HEK293 (cell line): ENCODE measurements at regions of chr1 and their contacts with region 1.

Region 1: GRCh38 chr1:109984456-109985275 is at the start of gene AHCYL1:
- H3K4me3 ChIP-seq: peak within 1 kb of the TSS; percentile 81
- H3K27ac ChIP-seq: peak within 1 kb of the TSS; percentile 68
- H3K4me1 ChIP-seq: 0 out of 2 replicates have a peak, but pooled peaks cover 3% of the 10 kb centered on the region
- CTCF ChIP-seq: peak; percentile 99

Region 2: DNA sequence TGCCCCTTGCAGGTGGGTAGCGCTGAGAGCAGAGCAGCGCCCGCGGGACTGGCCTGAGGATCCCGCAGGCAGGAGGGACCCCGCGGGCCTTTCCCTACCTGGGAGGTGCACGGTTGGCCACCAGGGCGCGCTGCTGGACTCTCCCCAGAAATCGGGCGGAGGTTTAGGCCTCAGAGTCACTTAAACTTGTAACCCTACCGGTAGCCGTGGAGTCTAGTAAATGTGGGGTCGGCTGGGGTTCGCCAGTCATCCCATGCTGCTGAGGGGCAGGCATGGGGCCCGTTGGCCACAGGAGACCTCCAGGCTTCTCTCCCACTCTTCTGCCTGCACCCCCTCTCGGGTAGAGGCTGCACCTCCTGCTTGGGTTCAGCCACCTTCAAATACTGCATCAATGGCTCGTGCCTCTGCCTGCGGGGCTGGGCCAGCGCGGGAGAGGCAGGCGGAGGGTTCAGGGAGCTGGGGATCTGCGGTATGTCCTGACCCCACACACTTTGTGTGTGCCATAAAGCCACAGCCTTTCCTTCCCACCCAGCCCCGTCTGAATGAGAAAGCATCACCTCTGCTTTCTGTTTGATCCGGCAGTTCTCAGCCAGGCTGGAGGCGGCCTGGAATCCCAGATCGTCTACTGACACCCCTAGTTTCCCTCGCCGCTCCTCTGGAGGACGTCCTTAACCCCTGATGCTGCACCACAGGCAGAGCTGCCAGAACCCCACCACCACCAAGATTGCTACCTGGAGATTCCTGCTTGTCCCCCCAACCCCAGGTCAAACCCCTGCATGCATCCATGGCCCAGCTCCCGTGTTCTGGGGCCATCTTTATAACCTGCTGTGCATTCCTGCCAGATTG is 341.1 kb before region 1 on chr1:
- CTCF ChIA-PET with region 1: interaction called, 87 read pairs
- POLR2A ChIA-PET with region 1: interaction called, 6 read pairs
- H3K4me3 ChIP-seq: no peak overlapping the region
- H3K27ac ChIP-seq: no peak overlapping the region
- H3K4me1 ChIP-seq: no peaks in the 10 kb centered on the region
- CTCF ChIP-seq: peak; percentile 89

Region 3: DNA sequence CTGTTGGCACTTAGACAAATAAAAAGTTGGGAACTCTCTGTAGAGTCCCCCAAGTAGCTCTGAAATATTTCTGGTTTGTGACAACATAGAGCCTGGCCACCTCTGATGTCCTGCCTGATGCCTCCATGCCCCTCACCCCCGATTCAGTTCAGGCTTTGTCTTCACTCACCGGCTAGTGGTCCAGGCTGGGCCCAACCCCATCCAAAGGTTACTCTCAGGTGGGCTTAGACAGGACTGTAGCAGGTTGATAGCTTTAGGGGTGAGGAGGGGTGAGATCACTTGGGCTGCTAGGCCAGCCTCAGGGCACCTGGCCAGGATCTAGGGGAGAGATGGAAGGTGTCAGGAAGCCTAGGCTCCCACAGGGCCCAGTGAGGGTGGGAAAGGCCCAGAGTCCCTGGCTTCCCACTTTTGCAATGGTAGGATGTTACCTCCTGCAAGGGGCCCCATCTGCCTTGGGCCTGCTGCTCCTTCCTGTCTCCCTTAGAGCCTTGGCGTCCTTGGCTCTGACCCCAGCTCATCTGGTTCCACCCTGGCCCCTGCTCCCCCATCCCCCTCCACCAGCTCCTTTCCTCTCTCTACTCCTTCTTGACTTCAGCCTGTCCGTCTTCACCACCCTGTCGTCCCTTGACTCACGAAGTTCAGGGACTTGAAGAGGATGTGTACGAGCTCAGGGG is 227.7 kb before region 1 on chr1:
- CTCF ChIA-PET with region 1: interaction called, 12 read pairs
- POLR2A ChIA-PET with region 1: no interaction called
- H3K4me3 ChIP-seq: no peak overlapping the region
- H3K27ac ChIP-seq: no peak overlapping the region
- H3K4me1 ChIP-seq: no peaks in the 10 kb centered on the region
- CTCF ChIP-seq: no peak

Region 4: DNA sequence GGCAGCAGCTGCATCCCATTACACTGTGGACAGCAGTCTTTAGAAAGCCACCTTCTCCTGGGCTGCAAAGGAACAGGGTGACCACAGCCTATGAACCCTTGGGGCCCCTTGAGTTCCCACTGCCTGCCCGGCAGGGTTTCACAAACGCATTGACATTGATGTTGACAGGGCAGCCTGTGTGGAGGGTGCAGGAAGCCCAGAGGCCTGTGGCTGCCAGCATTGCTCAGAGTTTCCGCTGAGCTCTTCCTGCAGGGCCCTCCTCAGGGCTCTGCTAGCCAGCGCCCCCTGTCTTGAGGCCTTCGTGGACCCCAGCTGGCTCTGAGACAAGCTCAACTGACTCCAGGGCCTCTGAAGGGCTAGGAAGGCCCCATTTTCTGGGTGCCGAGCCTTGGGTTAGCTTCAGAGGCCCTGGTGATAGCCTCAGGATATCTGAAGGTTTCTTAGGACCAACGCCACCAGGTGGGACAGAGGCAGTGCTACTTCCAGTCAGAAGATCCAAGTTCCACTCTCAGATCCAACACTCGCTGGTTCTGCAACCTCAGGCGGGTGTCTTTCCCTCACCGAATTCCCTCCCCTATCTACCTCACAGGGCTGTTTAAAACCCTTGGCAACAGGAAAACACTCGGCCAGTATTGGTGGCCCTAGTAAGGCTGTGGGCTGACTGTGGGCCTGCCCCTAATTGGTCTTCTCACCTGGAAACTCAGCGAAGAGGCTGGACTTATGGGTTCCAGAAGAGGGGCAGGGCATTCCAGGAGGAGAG is 193.8 kb before region 1 on chr1:
- CTCF ChIA-PET with region 1: interaction called, 522 read pairs
- POLR2A ChIA-PET with region 1: interaction called, 3 read pairs
- H3K4me3 ChIP-seq: no peak overlapping the region
- H3K27ac ChIP-seq: no peak overlapping the region
- H3K4me1 ChIP-seq: peaks cover 3% of the 10 kb centered on the region; the same call in 1 of the 2 replicates
- CTCF ChIP-seq: peak; percentile 38; the same call in 1 of the 2 replicates

Region 5: GRCh38 chr1:109931189-109931731 is 53.4 kb before region 1 on chr1:
- CTCF ChIA-PET with region 1: interaction called, 15 read pairs
- POLR2A ChIA-PET with region 1: interaction called, 4 read pairs
- H3K4me3 ChIP-seq: no peak overlapping the region
- H3K27ac ChIP-seq: no peak overlapping the region
- H3K4me1 ChIP-seq: no peaks in the 10 kb centered on the region
- CTCF ChIP-seq: no peak

Region 6: GRCh38 chr1:110005971-110006370 is 21.3 kb after region 1 on chr1:
- CTCF ChIA-PET with region 1: interaction called, 48 read pairs
- POLR2A ChIA-PET with region 1: interaction called, 4 read pairs
- H3K4me3 ChIP-seq: no peak overlapping the region
- H3K27ac ChIP-seq: no peak overlapping the region
- H3K4me1 ChIP-seq: peaks cover 25% of the 10 kb centered on the region
- CTCF ChIP-seq: no peak